ENCODE measurements at regions of chr12 and their contacts with region 1.

Region 1: DNA sequence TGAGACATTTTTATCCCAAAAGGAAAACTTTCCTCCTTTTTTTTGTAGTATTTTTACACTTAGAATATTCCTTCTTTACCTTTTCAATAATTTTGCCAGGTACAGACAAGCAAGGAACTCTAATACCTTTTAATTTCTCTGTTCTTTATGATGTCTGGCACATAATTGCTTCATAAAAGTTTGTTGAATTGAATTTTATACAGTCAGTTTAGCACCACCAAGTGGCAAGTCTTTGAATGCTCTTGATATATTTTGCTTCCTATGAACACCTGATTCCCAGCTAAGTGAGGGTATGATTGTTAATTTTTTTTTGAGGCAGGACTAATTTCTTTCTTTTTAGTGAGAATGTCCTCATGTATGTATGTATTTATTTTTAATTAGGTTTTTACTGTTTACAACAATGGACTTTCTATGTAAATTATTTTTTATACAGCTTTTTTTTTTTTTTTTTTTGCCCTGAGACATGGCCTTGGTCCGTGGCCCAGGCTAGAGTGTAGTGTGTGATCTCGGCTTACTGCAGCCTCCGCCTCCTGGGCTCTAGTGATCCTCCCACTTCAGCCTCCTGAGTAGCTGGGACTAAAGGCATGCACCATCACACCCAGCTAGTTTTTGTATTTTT is 6.9 kb downstream of the TBC1D15 start:
- DNase-seq: peak in 4 of 35 experiments; percentile 6 to 62 (median 17)
- ATAC-seq: peak in 3 of 4 experiments; percentile 35 to 58 (median 45)
- H3K4me3 ChIP-seq: no peak overlapping the region
- H3K4me3 Mint-ChIP-seq: no peak overlapping the region
- H3K27ac ChIP-seq: no peak overlapping the region
- H3K27ac Mint-ChIP-seq: no peak overlapping the region
- H3K4me1 ChIP-seq: peaks cover 12 to 13% of the 10 kb centered on the region in 2 experiments
- H3K4me1 Mint-ChIP-seq: peaks cover 31 to 38% (median 36%) of the 10 kb centered on the region in 3 donors
- H3K27me3 ChIP-seq: no peaks in the 10 kb centered on the region
- H3K27me3 Mint-ChIP-seq: no peaks in the 10 kb centered on the region

Region 2: GRCh38 chr12:71900091-71900490 is 53.7 kb after region 1 on chr12:
- CTCF ChIA-PET with region 1: interaction called, 7 to 13 read pairs
- POLR2A ChIA-PET with region 1: interaction called in 1 of 2 experiments, 3 read pairs
- DNase-seq: no peak
- ATAC-seq: no peak
- H3K4me3 ChIP-seq: no peak overlapping the region
- H3K4me3 Mint-ChIP-seq: no peak overlapping the region
- H3K27ac ChIP-seq: no peak overlapping the region
- H3K27ac Mint-ChIP-seq: no peak overlapping the region
- H3K4me1 ChIP-seq: no peaks in the 10 kb centered on the region
- H3K4me1 Mint-ChIP-seq: peaks cover 0 to 6% (median 0%) of the 10 kb centered on the region in 3 donors
- H3K27me3 ChIP-seq: no peaks in the 10 kb centered on the region
- H3K27me3 Mint-ChIP-seq: no peaks in the 10 kb centered on the region

Region 3: DNA sequence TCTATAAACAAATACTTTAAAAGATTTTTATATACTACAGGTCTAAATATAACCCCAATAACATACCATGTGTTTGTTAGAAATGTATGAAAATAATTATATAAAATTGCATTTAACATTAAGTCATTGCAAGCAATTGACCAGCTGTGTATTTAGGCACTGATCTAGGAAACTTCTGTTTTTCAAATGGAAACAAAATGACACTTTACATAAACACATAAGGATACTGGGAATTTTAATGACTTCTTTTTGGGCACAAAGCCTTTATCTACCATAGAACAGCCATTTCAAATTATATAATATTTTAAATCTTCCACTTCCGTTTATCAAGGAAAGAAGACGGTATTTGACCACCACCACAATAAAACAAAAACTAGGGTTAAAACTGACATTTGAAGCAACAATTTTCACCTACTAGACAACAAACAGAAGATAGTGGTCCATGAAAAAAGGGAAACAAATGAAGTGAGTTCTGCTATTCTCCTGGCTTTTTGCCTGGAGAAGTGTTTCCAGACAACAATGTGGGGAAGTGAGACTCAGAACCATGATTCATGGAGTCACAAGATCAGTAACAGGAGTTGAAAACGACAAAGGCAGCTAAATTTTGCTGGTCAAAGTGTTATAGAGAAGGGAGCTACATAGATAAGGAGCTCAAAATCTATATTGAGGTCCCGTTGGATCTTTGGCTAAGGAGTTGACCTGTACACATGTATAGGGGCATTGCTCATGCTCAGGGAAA is 900.8 kb after region 1 on chr12:
- CTCF ChIA-PET with region 1: no interaction called
- POLR2A ChIA-PET with region 1: no interaction called
- DNase-seq: no peak
- ATAC-seq: no peak
- H3K4me3 ChIP-seq: no peak overlapping the region
- H3K4me3 Mint-ChIP-seq: no peak overlapping the region
- H3K27ac ChIP-seq: no peak overlapping the region
- H3K27ac Mint-ChIP-seq: no peak overlapping the region
- H3K4me1 ChIP-seq: no peaks in the 10 kb centered on the region
- H3K4me1 Mint-ChIP-seq: no peaks in the 10 kb centered on the region
- H3K27me3 ChIP-seq: no peaks in the 10 kb centered on the region
- H3K27me3 Mint-ChIP-seq: no peaks in the 10 kb centered on the region